CD4-positive, alpha-beta memory T cell (primary cell): ENCODE measurements at regions of chr12 and their contacts with region 1.

Region 1: GRCh38 chr12:92145731-92146496 is at the start of gene BTG1:
- DNase-seq: peak; percentile 99 to 100 (median 100)
- H3K4me3 ChIP-seq: peak within 1 kb of the TSS; percentile 89 to 96
- H3K4me3 Mint-ChIP-seq: peak within 1 kb of the TSS; percentile 92 to 100 (median 100)
- H3K27ac ChIP-seq: peak within 1 kb of the TSS; percentile 86
- H3K27ac Mint-ChIP-seq: peak within 1 kb of the TSS; percentile 95 to 100 (median 100)
- H3K4me1 ChIP-seq: peaks cover 23% of the 10 kb centered on the region
- H3K4me1 Mint-ChIP-seq: peaks cover 9 to 37% (median 21%) of the 10 kb centered on the region in 4 donors
- H3K27me3 ChIP-seq: no peaks in the 10 kb centered on the region
- H3K27me3 Mint-ChIP-seq: no peaks in the 10 kb centered on the region
- total RNA-seq, gene BTG1: 431 to 469 TPM

Region 2: DNA sequence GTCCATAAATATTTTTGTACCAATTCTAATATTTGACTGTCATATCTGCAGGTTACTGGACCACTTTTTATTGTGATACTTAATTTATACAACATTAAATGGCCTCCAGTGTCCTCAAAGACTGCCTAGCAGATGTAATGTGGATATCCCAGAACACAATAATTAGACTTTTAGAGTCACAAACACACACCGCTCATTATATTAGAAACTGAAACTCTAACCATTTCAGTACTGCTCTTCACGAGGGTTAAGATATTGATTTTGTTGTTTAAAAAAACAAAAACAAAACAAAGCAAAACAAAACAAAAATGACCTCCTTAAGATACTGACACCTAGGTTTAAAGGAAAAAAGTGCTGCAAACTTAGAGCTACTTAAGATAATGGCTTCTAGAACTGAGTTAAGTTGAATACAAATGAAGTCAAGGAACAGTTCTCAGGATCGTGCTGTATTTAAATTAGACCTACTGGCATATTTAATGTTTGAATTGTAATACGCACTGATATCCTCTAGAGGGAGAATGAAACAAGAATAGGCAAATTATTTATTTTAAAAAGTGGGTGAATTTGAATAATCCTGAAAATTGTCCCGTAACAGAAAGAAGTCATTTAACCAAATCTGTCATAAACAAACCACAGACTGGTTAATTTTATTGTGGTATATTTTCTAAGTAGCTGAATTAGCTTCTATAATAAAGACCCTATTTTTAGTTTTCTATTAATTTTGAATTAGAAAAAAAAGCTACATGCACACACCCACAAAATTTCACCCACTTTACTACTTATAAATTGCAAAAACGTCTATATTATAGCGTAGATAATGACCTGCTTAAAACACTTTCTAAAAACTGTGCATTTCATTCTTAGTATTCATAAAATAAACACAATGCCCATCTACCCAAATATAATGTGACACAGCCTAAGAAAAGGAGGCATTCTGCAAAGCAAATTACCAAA is 568.1 kb before region 1 on chr12:
- CTCF ChIA-PET with region 1: interaction called, 15 read pairs
- POLR2A ChIA-PET with region 1: interaction called, 34 read pairs
- intact Hi-C with region 1: loop called (anchors 1 kb)
- DNase-seq: peak in 4 of 5 donors; percentile 33 to 44 (median 42)
- H3K4me3 ChIP-seq: peak overlapping the region; percentile 18 to 50
- H3K4me3 Mint-ChIP-seq: peak overlapping the region; percentile 77 to 91 (median 84)
- H3K27ac ChIP-seq: no peak overlapping the region
- H3K27ac Mint-ChIP-seq: peak overlapping the region in 5 of 7 donors; percentile 33 to 91 (median 77)
- H3K4me1 ChIP-seq: peaks cover 4% of the 10 kb centered on the region
- H3K4me1 Mint-ChIP-seq: peaks cover 4 to 9% (median 5%) of the 10 kb centered on the region in 4 donors
- H3K27me3 ChIP-seq: no peaks in the 10 kb centered on the region
- H3K27me3 Mint-ChIP-seq: peaks cover 1 to 3% of the 10 kb centered on the region in 2 donors

Region 3: GRCh38 chr12:91991399-91992187 is 154.3 kb before region 1 on chr12:
- CTCF ChIA-PET with region 1: interaction called, 52 read pairs
- POLR2A ChIA-PET with region 1: interaction called, 183 read pairs
- intact Hi-C with region 1: loop called (anchors 1 kb)
- DNase-seq: peak in 4 of 5 donors; percentile 51 to 67 (median 54)
- H3K4me3 ChIP-seq: no peak overlapping the region
- H3K4me3 Mint-ChIP-seq: no peak overlapping the region
- H3K27ac ChIP-seq: no peak overlapping the region
- H3K27ac Mint-ChIP-seq: peak overlapping the region in 5 of 7 donors; percentile 22 to 85 (median 70)
- H3K4me1 ChIP-seq: peaks cover 27% of the 10 kb centered on the region
- H3K4me1 Mint-ChIP-seq: peaks cover 18 to 37% (median 28%) of the 10 kb centered on the region in 4 donors
- H3K27me3 ChIP-seq: no peaks in the 10 kb centered on the region
- H3K27me3 Mint-ChIP-seq: no peaks in the 10 kb centered on the region

Region 4: GRCh38 chr12:92049403-92049802 is 96.5 kb before region 1 on chr12:
- CTCF ChIA-PET with region 1: interaction called, 4 read pairs
- POLR2A ChIA-PET with region 1: interaction called, 525 read pairs
- intact Hi-C with region 1: no loop called
- DNase-seq: peak in 1 of 5 donors; percentile 35
- H3K4me3 ChIP-seq: no peak overlapping the region
- H3K4me3 Mint-ChIP-seq: peak overlapping the region in 2 of 8 donors; percentile 49 to 51
- H3K27ac ChIP-seq: no peak overlapping the region
- H3K27ac Mint-ChIP-seq: peak overlapping the region in 2 of 7 donors; percentile 11 to 31
- H3K4me1 ChIP-seq: peaks cover 56% of the 10 kb centered on the region
- H3K4me1 Mint-ChIP-seq: peaks cover 36 to 82% (median 59%) of the 10 kb centered on the region in 4 donors
- H3K27me3 ChIP-seq: no peaks in the 10 kb centered on the region
- H3K27me3 Mint-ChIP-seq: no peaks in the 10 kb centered on the region

Region 5: GRCh38 chr12:92185052-92185451 is 39.1 kb after region 1 on chr12:
- CTCF ChIA-PET with region 1: interaction called, 4 read pairs
- POLR2A ChIA-PET with region 1: interaction called, 27 read pairs
- intact Hi-C with region 1: loop called (anchors 1 kb)
- DNase-seq: peak; percentile 56 to 67 (median 58)
- H3K4me3 ChIP-seq: peak overlapping the region in 1 of 2 donors; percentile 21
- H3K4me3 Mint-ChIP-seq: peak overlapping the region; percentile 26 to 84 (median 64)
- H3K27ac ChIP-seq: peak overlapping the region; percentile 60
- H3K27ac Mint-ChIP-seq: peak overlapping the region; percentile 64 to 92 (median 82)
- H3K4me1 ChIP-seq: peaks cover 39% of the 10 kb centered on the region
- H3K4me1 Mint-ChIP-seq: peaks cover 32 to 69% (median 54%) of the 10 kb centered on the region in 4 donors
- H3K27me3 ChIP-seq: no peaks in the 10 kb centered on the region
- H3K27me3 Mint-ChIP-seq: no peaks in the 10 kb centered on the region

Region 6: GRCh38 chr12:92505254-92506231 is 359.6 kb after region 1 on chr12:
- CTCF ChIA-PET with region 1: interaction called, 4 read pairs
- POLR2A ChIA-PET with region 1: interaction called, 109 read pairs
- intact Hi-C with region 1: loop called (anchors 5 kb)
- DNase-seq: peak; percentile 45 to 60 (median 56)
- H3K4me3 ChIP-seq: peak overlapping the region; percentile 28 to 30
- H3K4me3 Mint-ChIP-seq: peak overlapping the region; percentile 80 to 94 (median 91)
- H3K27ac ChIP-seq: peak overlapping the region; percentile 58
- H3K27ac Mint-ChIP-seq: peak overlapping the region; percentile 75 to 98 (median 94)
- H3K4me1 ChIP-seq: peaks cover 42% of the 10 kb centered on the region
- H3K4me1 Mint-ChIP-seq: peaks cover 24 to 37% (median 32%) of the 10 kb centered on the region in 4 donors
- H3K27me3 ChIP-seq: no peaks in the 10 kb centered on the region
- H3K27me3 Mint-ChIP-seq: no peaks in the 10 kb centered on the region

Region 7: GRCh38 chr12:92844151-92844763 is 698.3 kb after region 1 on chr12:
- CTCF ChIA-PET with region 1: no interaction called
- POLR2A ChIA-PET with region 1: no interaction called
- intact Hi-C with region 1: no loop called
- DNase-seq: no peak
- H3K4me3 ChIP-seq: no peak overlapping the region
- H3K4me3 Mint-ChIP-seq: no peak overlapping the region
- H3K27ac ChIP-seq: no peak overlapping the region
- H3K27ac Mint-ChIP-seq: no peak overlapping the region
- H3K4me1 ChIP-seq: no peaks in the 10 kb centered on the region
- H3K4me1 Mint-ChIP-seq: no peaks in the 10 kb centered on the region
- H3K27me3 ChIP-seq: no peaks in the 10 kb centered on the region
- H3K27me3 Mint-ChIP-seq: no peaks in the 10 kb centered on the region

Region 8: GRCh38 chr12:92928962-92929915 is 783.3 kb after region 1 on chr12 and contains the start of gene EEA1:
- CTCF ChIA-PET with region 1: no interaction called
- POLR2A ChIA-PET with region 1: interaction called, 10 read pairs
- intact Hi-C with region 1: no loop called
- DNase-seq: peak; percentile 92 to 94 (median 94)
- H3K4me3 ChIP-seq: peak within 1 kb of the TSS; percentile 57 to 59
- H3K4me3 Mint-ChIP-seq: peak within 1 kb of the TSS; percentile 89 to 94 (median 92)
- H3K27ac ChIP-seq: peak within 1 kb of the TSS; percentile 90
- H3K27ac Mint-ChIP-seq: peak within 1 kb of the TSS; percentile 87 to 98 (median 95)
- H3K4me1 ChIP-seq: peaks cover 28% of the 10 kb centered on the region
- H3K4me1 Mint-ChIP-seq: peaks cover 21 to 38% (median 32%) of the 10 kb centered on the region in 4 donors
- H3K27me3 ChIP-seq: no peaks in the 10 kb centered on the region
- H3K27me3 Mint-ChIP-seq: no peaks in the 10 kb centered on the region
- total RNA-seq, gene EEA1: 16.1 to 16.4 TPM